Activated T-helper 2 cell treated with anti-CD3 and anti-CD28 coated beads, Interferon-gamma antibody, Interleukin-2, Interleukin-4, amounts not matched to agents 10 μg/mL and 5 μg/mL and 100 μg/mL, durations not matched to agents 14 hours and 24 hours and 36 hours (primary cell): ENCODE measurements at regions of chrX and their contacts with region 1.

Region 1: GRCh38 chrX:139795196-139795595 is 87.2 kb upstream of the MCF2 start:
- DNase-seq: no peak
- H3K4me3 Mint-ChIP-seq: no peak overlapping the region
- H3K27ac Mint-ChIP-seq: peak overlapping the region; percentile 60
- H3K4me1 Mint-ChIP-seq: peaks cover 8% of the 10 kb centered on the region
- H3K27me3 Mint-ChIP-seq: no peaks in the 10 kb centered on the region

Region 2: GRCh38 chrX:139739138-139739537 is 56.1 kb before region 1 on chrX:
- intact Hi-C with region 1: loop called (anchors 2 kb)
- DNase-seq: peak; percentile 10
- H3K4me3 Mint-ChIP-seq: no peak overlapping the region
- H3K27ac Mint-ChIP-seq: peak overlapping the region; percentile 35
- H3K4me1 Mint-ChIP-seq: peaks cover 15% of the 10 kb centered on the region
- H3K27me3 Mint-ChIP-seq: no peaks in the 10 kb centered on the region

Region 3: GRCh38 chrX:139892512-139892911 is 97.3 kb after region 1 on chrX:
- intact Hi-C with region 1: no loop called
- DNase-seq: no peak
- H3K4me3 Mint-ChIP-seq: no peak overlapping the region
- H3K27ac Mint-ChIP-seq: no peak overlapping the region
- H3K4me1 Mint-ChIP-seq: peaks cover 10% of the 10 kb centered on the region
- H3K27me3 Mint-ChIP-seq: no peaks in the 10 kb centered on the region